Mammary epithelial cell (primary cell): ENCODE measurements at regions of chr5 and their contacts with region 1.

Region 1: GRCh38 chr5:115309751-115310370 is 13.4 kb upstream of the CCDC112 start:
- DNase-seq: peak; percentile 43
- H3K4me3 ChIP-seq: no peak overlapping the region
- H3K27ac ChIP-seq: no peak overlapping the region
- H3K4me1 ChIP-seq: no peaks in the 10 kb centered on the region
- H3K27me3 ChIP-seq: no peaks in the 10 kb centered on the region
- CTCF ChIP-seq: peak; percentile 47 to 63

Region 2: DNA sequence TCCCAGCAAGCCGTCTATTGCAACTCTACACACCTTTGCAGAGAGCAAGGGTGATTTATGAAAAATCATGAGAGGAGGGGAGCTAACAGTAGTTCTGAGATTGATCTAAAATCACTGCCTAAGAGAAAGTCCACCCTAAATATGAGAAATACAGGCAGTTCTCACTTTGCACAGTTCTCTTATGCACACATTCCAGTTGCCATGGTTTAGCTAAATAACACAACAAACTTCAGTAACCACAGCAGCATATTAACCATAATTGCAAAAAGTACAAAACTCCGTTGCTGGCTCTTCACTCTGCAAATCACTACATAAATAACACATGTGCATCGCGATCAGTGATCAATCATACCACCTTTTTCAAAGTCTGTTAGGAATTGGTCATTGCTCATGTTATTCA is 78.3 kb before region 1 on chr5:
- CTCF ChIA-PET with region 1: no interaction called
- dilution Hi-C with region 1: no loop called
- in situ Hi-C with region 1: no loop called
- intact Hi-C with region 1: no loop called
- DNase-seq: no peak
- H3K4me3 ChIP-seq: no peak overlapping the region
- H3K27ac ChIP-seq: no peak overlapping the region
- H3K4me1 ChIP-seq: no peaks in the 10 kb centered on the region
- H3K27me3 ChIP-seq: no peaks in the 10 kb centered on the region
- CTCF ChIP-seq: no peak

Region 3: DNA sequence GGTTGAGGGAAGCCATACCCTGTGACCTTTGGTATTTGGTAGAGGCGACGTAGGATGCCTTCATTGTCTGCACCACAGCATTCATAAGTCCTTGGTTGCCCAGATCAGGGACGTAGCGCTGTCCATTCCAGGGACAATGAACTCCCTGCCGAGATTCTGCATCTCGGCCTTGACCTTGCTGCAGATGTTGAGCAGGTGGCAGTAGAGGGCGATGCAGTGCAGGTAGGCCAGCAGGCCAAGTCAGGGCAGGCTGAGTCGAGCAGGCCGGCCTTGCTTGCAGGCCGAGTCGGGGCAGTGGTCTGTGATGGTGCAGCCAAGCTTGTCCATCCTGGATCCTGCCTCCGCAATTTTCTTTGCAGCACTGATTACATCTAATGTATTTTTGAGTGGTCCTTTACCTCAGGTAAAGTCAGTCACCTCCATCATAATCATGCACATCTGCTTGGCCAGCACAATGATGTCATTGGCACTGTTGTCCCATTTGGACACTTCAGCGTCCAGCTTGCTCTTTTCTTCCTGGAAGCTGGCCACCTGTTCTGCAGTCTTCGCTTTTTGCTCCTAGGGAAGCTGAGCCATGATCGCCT is 80.0 kb after region 1 on chr5:
- CTCF ChIA-PET with region 1: no interaction called
- dilution Hi-C with region 1: loop called (anchors 5 kb)
- in situ Hi-C with region 1: no loop called
- intact Hi-C with region 1: no loop called
- DNase-seq: no peak
- H3K4me3 ChIP-seq: no peak overlapping the region
- H3K27ac ChIP-seq: no peak overlapping the region
- H3K4me1 ChIP-seq: no peaks in the 10 kb centered on the region
- H3K27me3 ChIP-seq: no peaks in the 10 kb centered on the region
- CTCF ChIP-seq: peak; percentile 7 to 49

Region 4: GRCh38 chr5:115579747-115580173 is 269.9 kb after region 1 on chr5:
- CTCF ChIA-PET with region 1: interaction called, 9 read pairs
- dilution Hi-C with region 1: loop called (anchors 25 kb)
- in situ Hi-C with region 1: loop called in 1 of 2 experiments (anchors 5 kb)
- intact Hi-C with region 1: loop called (anchors 1 kb)
- DNase-seq: no peak
- H3K4me3 ChIP-seq: no peak overlapping the region
- H3K27ac ChIP-seq: no peak overlapping the region
- H3K4me1 ChIP-seq: peaks cover 25% of the 10 kb centered on the region
- H3K27me3 ChIP-seq: no peaks in the 10 kb centered on the region
- CTCF ChIP-seq: no peak

Region 5: DNA sequence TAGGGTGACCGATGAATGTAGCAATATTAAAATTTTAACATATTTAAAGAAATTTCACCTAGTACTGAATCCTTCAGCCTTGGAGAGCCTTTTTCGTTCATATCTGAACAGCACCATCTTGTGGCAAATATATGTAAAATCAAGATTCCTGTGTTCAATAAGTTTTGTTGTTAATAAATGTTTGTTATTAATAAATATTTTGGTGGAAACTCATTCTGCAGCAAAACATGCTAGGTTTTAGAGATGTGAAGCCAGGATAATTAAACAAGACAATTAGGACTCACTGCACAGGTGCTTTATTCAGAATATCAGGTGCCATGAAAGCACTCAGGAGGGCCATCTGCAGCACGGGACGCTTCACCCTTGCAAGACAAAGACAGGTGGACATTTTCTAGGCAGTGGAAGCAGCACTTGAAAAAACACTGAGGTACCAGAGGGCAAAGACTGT is 276.8 kb after region 1 on chr5:
- CTCF ChIA-PET with region 1: no interaction called
- dilution Hi-C with region 1: loop called (anchors 25 kb)
- in situ Hi-C with region 1: loop called in 1 of 2 experiments (anchors 5 kb)
- intact Hi-C with region 1: loop called (anchors 1 kb)
- DNase-seq: no peak
- H3K4me3 ChIP-seq: no peak overlapping the region
- H3K27ac ChIP-seq: no peak overlapping the region
- H3K4me1 ChIP-seq: peaks cover 10% of the 10 kb centered on the region
- H3K27me3 ChIP-seq: no peaks in the 10 kb centered on the region
- CTCF ChIP-seq: peak; percentile 44 to 52